ENCODE measurements at regions of chr7 and their contacts with region 1.

Region 1: GRCh38 chr7:142669074-142669654 is 80.1 kb upstream of the PRSS1 start:
- DNase-seq: peak in 2 of 9 experiments; percentile 41 to 56
- ATAC-seq: peak; percentile 29
- H3K4me3 ChIP-seq: no peak overlapping the region
- H3K4me3 Mint-ChIP-seq: no peak overlapping the region
- H3K27ac ChIP-seq: no peak overlapping the region
- H3K27ac Mint-ChIP-seq: peak overlapping the region; percentile 20
- H3K4me1 ChIP-seq: peaks cover 20% of the 10 kb centered on the region
- H3K4me1 Mint-ChIP-seq: peaks cover 25% of the 10 kb centered on the region
- H3K27me3 ChIP-seq: no peaks in the 10 kb centered on the region
- H3K27me3 Mint-ChIP-seq: no peaks in the 10 kb centered on the region
- CTCF ChIP-seq: peak; percentile 30

Region 2: DNA sequence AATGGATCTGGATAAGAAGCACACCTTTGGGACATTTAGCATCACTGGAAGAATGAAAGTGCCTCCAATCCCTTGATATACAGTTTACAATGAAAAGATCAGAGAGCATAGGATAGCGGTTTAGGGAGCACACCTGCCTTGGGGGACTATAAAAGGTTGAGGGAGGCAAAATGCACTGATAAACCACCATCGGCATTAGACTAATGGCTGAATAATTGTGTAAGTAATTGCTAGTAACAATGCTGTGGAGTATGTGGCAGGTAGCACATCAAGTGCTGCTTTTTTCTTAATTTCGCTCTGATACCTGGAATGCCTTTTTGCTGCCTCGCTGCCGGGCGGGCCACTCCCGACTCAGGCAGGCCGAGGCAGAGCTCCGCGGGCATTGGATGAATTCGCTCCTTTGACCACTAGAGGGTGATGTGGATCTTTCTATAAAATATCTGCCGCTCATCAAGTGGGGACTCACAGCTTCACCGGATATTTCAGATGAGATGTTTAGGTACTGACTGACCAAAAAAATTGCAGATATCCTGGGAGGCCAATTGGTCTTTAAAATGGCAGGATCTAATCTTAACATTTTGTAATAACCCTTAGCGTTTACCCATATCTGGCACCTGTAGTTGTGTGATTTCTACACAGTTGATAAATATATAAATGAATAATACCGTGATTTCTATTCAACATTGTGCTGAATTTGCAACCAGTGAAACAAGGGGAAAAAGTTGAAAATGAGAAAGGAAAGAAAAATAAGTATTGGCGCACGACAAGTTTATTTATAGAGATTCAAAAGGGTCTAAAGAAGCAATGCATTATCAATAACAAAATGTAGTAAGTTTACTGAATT is 36.7 kb before region 1 on chr7:
- CTCF ChIA-PET with region 1: interaction called, 8 read pairs
- POLR2A ChIA-PET with region 1: no interaction called
- intact Hi-C with region 1: loop called (anchors 2 kb)
- DNase-seq: peak; percentile 10 to 82 (median 49)
- ATAC-seq: peak; percentile 51
- H3K4me3 ChIP-seq: no peak overlapping the region
- H3K4me3 Mint-ChIP-seq: no peak overlapping the region
- H3K27ac ChIP-seq: no peak overlapping the region
- H3K27ac Mint-ChIP-seq: peak overlapping the region; percentile 18
- H3K4me1 ChIP-seq: no peaks in the 10 kb centered on the region
- H3K4me1 Mint-ChIP-seq: peaks cover 13% of the 10 kb centered on the region
- H3K27me3 ChIP-seq: no peaks in the 10 kb centered on the region
- H3K27me3 Mint-ChIP-seq: peaks cover 2% of the 10 kb centered on the region
- CTCF ChIP-seq: peak; percentile 58

Region 3: GRCh38 chr7:142711746-142712619 is 42.8 kb after region 1 on chr7:
- CTCF ChIA-PET with region 1: interaction called, 4 read pairs
- POLR2A ChIA-PET with region 1: no interaction called
- intact Hi-C with region 1: loop called (anchors 2 to 5 kb)
- DNase-seq: peak in 6 of 9 experiments; percentile 26 to 74 (median 46)
- ATAC-seq: peak; percentile 76
- H3K4me3 ChIP-seq: peak overlapping the region; percentile 42 to 64
- H3K4me3 Mint-ChIP-seq: peak overlapping the region; percentile 89
- H3K27ac ChIP-seq: peak overlapping the region; percentile 56 to 70
- H3K27ac Mint-ChIP-seq: peak overlapping the region; percentile 95
- H3K4me1 ChIP-seq: peaks cover 46% of the 10 kb centered on the region
- H3K4me1 Mint-ChIP-seq: peaks cover 58% of the 10 kb centered on the region
- H3K27me3 ChIP-seq: no peaks in the 10 kb centered on the region
- H3K27me3 Mint-ChIP-seq: no peaks in the 10 kb centered on the region
- CTCF ChIP-seq: peak; percentile 38

Measured in CD8-positive, alpha-beta T cell (primary cell).